ENCODE measurements at regions of chr1 and their contacts with region 1.

Region 1: GRCh38 chr1:238293075-238293474 is 402.4 kb upstream of the ZP4 start:
- DNase-seq: no peak
- ATAC-seq: no peak
- H3K4me3 ChIP-seq: no peak overlapping the region
- H3K4me3 Mint-ChIP-seq: no peak overlapping the region
- H3K27ac ChIP-seq: no peak overlapping the region
- H3K27ac Mint-ChIP-seq: no peak overlapping the region
- H3K4me1 ChIP-seq: no peaks in the 10 kb centered on the region
- H3K4me1 Mint-ChIP-seq: no peaks in the 10 kb centered on the region
- H3K27me3 ChIP-seq: no peaks in the 10 kb centered on the region
- H3K27me3 Mint-ChIP-seq: no peaks in the 10 kb centered on the region
- CTCF ChIP-seq: no peak

Region 2: DNA sequence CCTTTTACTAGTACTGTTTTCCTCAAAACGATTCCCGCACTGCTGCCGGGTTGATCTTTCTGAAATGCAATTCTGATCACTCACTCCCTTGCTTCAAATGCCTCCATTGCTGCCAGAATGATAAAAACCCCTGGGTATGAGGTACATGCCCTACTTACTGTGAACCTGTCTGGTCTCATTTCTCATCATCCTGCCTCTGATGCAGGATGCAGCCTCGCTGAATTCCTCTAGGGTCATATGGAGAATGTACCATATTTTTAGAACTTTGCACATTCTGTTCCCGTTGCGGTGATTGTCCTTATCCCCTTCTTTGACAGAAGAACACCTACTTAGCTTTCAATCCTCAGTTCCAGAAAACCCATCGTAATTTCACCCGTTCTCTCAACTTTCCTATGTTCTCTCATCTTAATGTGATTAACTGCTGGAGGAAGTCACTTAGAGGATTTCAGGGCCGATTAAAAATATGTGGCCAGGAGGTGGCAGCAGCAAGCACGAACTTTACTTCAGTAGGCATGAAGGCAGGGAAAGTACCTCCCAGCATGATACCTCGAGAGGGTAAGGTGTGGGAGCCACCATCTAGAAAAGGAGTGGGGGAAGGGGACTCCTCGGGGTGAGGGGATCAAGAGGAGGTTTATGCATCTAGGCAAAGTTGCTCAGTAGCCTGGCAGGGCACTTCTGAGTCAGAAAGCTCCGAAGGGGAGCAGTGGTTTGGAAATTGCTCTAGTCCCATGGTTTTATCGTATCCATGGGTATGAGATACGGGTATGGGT is 40.9 kb before region 1 on chr1:
- CTCF ChIA-PET with region 1: no interaction called
- POLR2A ChIA-PET with region 1: no interaction called
- intact Hi-C with region 1: loop called in 1 of 2 experiments (anchors 1 kb)
- DNase-seq: peak in 3 of 9 experiments; percentile 4 to 16 (median 5)
- ATAC-seq: no peak
- H3K4me3 ChIP-seq: no peak overlapping the region
- H3K4me3 Mint-ChIP-seq: no peak overlapping the region
- H3K27ac ChIP-seq: no peak overlapping the region
- H3K27ac Mint-ChIP-seq: no peak overlapping the region
- H3K4me1 ChIP-seq: no peaks in the 10 kb centered on the region
- H3K4me1 Mint-ChIP-seq: no peaks in the 10 kb centered on the region
- H3K27me3 ChIP-seq: no peaks in the 10 kb centered on the region
- H3K27me3 Mint-ChIP-seq: no peaks in the 10 kb centered on the region
- CTCF ChIP-seq: no peak